Activated CD4-positive, alpha-beta T cell treated with anti-CD3 and anti-CD28 coated beads, Interleukin-2, amount 10 ng/mL, durations not matched to agents 24 days and 14 days (primary cell): ENCODE measurements at regions of chr9 and their contacts with region 1.

Region 1: GRCh38 chr9:120755827-120756434 is 37.3 kb downstream of the FBXW2 start:
- DNase-seq: peak; percentile 93
- H3K4me3 Mint-ChIP-seq: no peak overlapping the region
- H3K27ac Mint-ChIP-seq: peak overlapping the region; percentile 48
- H3K4me1 Mint-ChIP-seq: peaks cover 15% of the 10 kb centered on the region
- H3K27me3 Mint-ChIP-seq: no peaks in the 10 kb centered on the region

Region 2: DNA sequence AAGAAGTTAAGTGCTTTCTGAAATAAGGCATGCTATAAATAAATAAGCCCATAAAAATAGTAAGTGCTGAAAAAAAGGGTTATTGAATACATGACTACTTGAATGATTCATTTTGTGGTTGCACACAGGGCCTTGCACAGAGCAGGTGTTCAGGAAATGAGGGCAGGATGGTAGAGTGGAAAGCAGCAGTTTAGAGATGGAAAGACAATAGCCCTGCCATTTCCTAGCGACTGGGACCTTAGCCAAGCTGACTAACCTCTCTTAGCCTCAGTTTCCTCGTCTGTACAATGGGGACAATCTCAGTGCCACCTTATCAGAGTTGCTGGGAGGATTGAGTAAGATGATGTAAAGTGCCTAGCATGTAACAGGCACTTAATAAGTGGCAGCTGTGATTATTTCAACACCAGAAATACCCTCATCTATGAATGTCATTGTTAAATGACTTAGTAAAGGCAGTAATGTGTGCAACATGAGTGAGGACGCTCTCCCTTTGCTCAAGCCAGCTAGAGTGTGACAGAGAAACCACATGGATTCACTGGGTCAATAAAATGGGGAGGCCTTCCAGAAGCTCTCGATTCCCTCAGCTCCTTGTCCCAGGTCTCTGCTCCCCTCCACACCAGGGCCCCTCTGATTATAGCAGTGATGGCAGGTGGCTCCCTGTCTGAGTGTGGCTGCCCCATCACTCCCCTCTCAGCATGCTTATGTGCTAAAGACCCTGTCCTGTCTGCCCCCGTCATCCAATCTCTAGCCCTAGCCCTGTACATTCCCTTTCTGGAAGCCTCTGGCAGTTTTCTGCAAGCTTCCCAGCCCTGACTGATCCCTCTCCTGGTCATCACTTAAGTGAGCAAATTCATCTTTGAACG is 137.0 kb after region 1 on chr9:
- intact Hi-C with region 1: loop called (anchors 5 kb)
- DNase-seq: peak; percentile 90
- H3K4me3 Mint-ChIP-seq: peak overlapping the region; percentile 85
- H3K27ac Mint-ChIP-seq: peak overlapping the region; percentile 99
- H3K4me1 Mint-ChIP-seq: peaks cover 79% of the 10 kb centered on the region
- H3K27me3 Mint-ChIP-seq: no peaks in the 10 kb centered on the region

Region 3: DNA sequence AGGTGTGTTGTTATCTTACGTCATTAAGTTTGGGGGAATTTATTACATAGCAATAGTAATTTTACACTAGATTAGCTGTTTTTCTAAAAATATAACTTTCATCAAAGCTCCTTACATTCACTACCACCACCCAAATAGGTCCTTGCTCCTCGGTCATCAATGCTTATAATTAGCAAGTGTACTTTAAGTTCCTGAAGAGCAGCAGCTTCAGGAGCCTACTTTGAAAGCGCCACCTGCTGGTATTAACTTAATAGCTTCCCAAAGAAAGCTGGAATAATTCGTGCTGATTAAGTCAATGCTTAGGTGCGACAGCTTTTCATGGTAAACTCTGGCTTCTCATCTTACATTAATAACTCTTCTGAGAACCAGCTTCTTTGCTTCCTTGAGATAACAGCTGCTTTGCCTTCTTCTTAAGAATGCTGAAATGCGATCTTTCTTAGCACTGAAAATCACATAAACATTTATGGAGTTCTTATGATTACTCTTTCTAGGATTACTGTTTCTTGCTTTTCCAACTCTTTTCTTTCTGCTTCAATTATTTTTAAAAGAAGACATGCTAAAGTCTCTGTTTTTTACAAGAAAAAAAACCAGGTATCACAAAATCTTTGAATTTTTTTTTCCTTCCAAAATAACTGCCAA is 304.2 kb after region 1 on chr9:
- intact Hi-C with region 1: loop called (anchors 2 kb)
- DNase-seq: peak; percentile 80
- H3K4me3 Mint-ChIP-seq: no peak overlapping the region
- H3K27ac Mint-ChIP-seq: no peak overlapping the region
- H3K4me1 Mint-ChIP-seq: peaks cover 14% of the 10 kb centered on the region
- H3K27me3 Mint-ChIP-seq: peaks cover 5% of the 10 kb centered on the region